Panc1 (cell line): ENCODE measurements at regions of chr6 and their contacts with region 1.

Region 1: DNA sequence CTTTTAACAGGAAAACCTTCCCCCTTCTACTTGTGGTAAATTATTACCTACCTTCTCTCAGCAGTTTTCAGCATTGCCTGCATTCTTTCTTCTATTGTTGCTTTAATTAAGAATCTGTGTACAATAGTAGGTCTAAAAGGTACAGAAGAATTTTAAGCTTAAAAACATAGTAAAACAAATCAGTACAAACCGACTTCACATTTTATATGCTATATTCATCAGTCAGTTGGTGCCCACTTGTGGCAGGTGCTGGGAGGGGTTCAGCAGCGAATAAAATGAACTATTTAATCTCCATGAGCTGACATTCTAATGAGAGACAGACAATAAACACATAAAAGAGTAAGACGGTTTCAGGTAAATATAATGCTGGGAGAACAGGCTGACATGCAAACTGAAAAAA is 73.4 kb upstream of the FBXO30 start:
- DNase-seq: no peak
- ATAC-seq: no peak
- H3K4me3 ChIP-seq: no peak overlapping the region
- H3K27ac ChIP-seq: no peak overlapping the region
- H3K4me1 ChIP-seq: peaks cover 3% of the 10 kb centered on the region; the same call in 1 of the 2 replicates
- H3K27me3 ChIP-seq: no peaks in the 10 kb centered on the region
- CTCF ChIP-seq: peak; percentile 57; the same call in 1 of the 2 replicates

Region 2: GRCh38 chr6:145276756-145277155 is 611.2 kb before region 1 on chr6:
- CTCF ChIA-PET with region 1: no interaction called
- POLR2A ChIA-PET with region 1: interaction called, 15 read pairs
- in situ Hi-C with region 1: no loop called
- intact Hi-C with region 1: no loop called
- DNase-seq: no peak
- ATAC-seq: no peak
- H3K4me3 ChIP-seq: no peak overlapping the region
- H3K27ac ChIP-seq: no peak overlapping the region
- H3K4me1 ChIP-seq: no peaks in the 10 kb centered on the region
- H3K27me3 ChIP-seq: no peaks in the 10 kb centered on the region
- CTCF ChIP-seq: no peak

Region 3: DNA sequence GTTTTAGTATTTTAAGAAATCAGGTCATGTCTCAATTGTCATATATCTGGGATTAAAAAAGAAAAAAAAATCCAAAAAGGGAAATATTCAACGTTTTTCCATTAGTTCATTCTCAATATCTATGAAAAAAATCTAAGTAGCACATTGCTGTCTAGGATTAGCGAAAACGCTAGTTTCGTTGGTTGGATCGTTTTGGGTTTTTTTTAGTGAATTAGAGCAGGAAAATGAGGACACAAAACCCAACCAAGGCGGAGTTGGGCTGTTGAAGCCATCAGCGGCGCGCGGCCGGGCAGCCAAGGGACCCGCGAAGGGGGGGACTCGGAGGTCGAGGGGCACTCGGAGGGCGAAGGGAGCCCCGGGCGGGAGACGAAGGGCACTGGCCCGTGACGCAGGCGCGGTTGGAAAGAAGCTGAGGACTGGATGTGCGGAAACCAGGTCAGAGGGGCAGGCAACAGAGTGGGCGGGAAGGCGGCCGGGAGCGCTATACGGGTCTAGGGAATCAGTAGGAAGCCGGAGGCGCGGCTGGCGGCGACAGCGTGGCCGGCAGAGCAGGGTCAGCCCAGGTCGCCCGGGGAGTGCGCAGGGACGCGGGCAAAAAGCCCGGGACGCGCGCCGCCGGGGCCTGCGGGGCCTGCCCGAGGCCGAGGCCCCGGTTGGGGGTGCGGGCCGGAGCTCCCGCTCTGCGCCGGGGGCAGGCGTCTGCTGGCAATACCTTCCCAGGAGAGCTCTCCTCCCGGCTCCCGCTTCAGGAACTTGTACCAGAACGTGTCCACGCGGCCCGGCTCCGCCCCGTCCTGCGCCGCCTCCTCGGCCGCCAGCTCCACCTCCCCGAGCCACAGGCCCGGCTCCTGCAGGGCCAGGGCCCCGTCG is 153.2 kb before region 1 on chr6:
- CTCF ChIA-PET with region 1: no interaction called
- POLR2A ChIA-PET with region 1: no interaction called
- in situ Hi-C with region 1: no loop called
- intact Hi-C with region 1: loop called (anchors 10 kb)
- DNase-seq: no peak
- ATAC-seq: peak; percentile 98
- H3K4me3 ChIP-seq: peak overlapping the region; percentile 83 to 87
- H3K27ac ChIP-seq: peak overlapping the region; percentile 98
- H3K4me1 ChIP-seq: peaks cover 17% of the 10 kb centered on the region
- H3K27me3 ChIP-seq: no peaks in the 10 kb centered on the region
- CTCF ChIP-seq: no peak

Region 4: GRCh38 chr6:146103416-146104072 is 215.6 kb after region 1 on chr6:
- CTCF ChIA-PET with region 1: no interaction called
- POLR2A ChIA-PET with region 1: no interaction called
- in situ Hi-C with region 1: no loop called
- intact Hi-C with region 1: no loop called
- DNase-seq: no peak
- ATAC-seq: no peak
- H3K4me3 ChIP-seq: no peak overlapping the region
- H3K27ac ChIP-seq: no peak overlapping the region
- H3K4me1 ChIP-seq: no peaks in the 10 kb centered on the region
- H3K27me3 ChIP-seq: no peaks in the 10 kb centered on the region
- CTCF ChIP-seq: no peak

Region 5: DNA sequence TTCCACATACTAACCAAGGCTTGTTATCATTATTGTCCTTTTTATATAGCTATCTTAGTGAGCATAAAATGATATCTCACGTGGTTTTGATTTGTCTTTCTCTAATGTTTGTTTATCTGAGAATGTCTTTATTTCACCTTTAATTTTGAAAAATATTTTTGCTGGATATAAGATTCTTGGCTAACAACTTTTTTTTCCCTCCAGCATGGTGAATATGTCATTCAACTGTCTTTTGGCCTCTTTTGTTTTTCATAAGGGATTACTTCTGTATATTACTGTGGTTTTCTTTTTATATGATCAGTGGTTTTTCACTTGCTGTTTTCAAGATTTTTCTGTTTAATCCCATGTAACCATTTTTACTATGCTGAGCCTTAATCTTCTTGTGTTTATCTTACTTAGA is 281.9 kb after region 1 on chr6:
- CTCF ChIA-PET with region 1: no interaction called
- POLR2A ChIA-PET with region 1: no interaction called
- in situ Hi-C with region 1: no loop called
- intact Hi-C with region 1: no loop called
- DNase-seq: no peak
- ATAC-seq: no peak
- H3K4me3 ChIP-seq: no peak overlapping the region
- H3K27ac ChIP-seq: no peak overlapping the region
- H3K4me1 ChIP-seq: no peaks in the 10 kb centered on the region
- H3K27me3 ChIP-seq: no peaks in the 10 kb centered on the region
- CTCF ChIP-seq: no peak

Region 6: GRCh38 chr6:146312608-146313007 is 424.6 kb after region 1 on chr6:
- CTCF ChIA-PET with region 1: no interaction called
- POLR2A ChIA-PET with region 1: no interaction called
- in situ Hi-C with region 1: no loop called
- intact Hi-C with region 1: no loop called
- DNase-seq: no peak
- ATAC-seq: no peak
- H3K4me3 ChIP-seq: no peak overlapping the region
- H3K27ac ChIP-seq: no peak overlapping the region
- H3K4me1 ChIP-seq: no peaks in the 10 kb centered on the region
- H3K27me3 ChIP-seq: no peaks in the 10 kb centered on the region
- CTCF ChIP-seq: no peak

Region 7: GRCh38 chr6:147016440-147016839 is 1128.5 kb after region 1 on chr6:
- CTCF ChIA-PET with region 1: no interaction called
- POLR2A ChIA-PET with region 1: no interaction called
- in situ Hi-C with region 1: no loop called
- intact Hi-C with region 1: no loop called
- DNase-seq: no peak
- ATAC-seq: no peak
- H3K4me3 ChIP-seq: no peak overlapping the region
- H3K27ac ChIP-seq: no peak overlapping the region
- H3K4me1 ChIP-seq: no peaks in the 10 kb centered on the region
- H3K27me3 ChIP-seq: no peaks in the 10 kb centered on the region
- CTCF ChIP-seq: no peak